ENCODE measurements at regions of chr11 and their contacts with region 1.

Region 1: DNA sequence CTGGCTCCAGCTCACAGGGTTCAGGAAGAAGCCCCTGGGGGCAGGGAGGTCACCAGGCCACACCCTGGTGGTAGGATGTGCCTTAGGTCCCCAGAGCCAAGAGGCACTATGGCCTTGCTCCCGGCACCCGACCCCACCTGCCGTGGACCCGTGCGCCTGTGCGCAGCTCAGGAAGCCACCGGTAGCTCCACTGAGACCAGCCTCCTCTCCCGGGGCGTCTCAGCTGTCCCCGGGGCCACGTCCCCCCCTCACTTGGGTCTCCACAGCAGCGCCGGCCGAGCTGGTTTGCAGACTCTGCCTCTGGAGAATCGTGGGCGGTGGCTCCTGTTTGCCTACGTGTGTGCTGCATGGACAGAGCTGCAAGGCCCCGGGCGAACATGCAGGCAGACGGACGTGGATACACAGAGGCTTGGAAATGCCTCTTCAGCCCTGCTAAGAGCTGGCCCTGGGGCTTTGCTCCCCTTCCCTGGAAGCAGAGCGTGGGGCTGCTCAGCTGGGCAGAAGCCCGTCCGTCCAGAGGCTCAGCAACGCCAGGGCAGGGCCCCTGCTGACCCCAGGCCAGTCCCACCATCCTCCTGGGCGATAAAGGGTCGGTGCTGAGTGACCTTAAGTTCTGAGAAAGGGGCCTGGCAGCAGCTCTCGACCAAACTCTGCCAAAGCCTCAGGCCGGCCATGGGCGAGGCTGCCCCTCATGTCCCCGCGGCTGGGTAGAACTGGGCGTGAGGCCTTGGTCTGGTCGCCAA is 15.3 kb upstream of the MUC5B start:
- DNase-seq: no peak
- ATAC-seq: no peak
- H3K4me3 ChIP-seq: no peak overlapping the region
- H3K4me3 Mint-ChIP-seq: no peak overlapping the region
- H3K27ac ChIP-seq: no peak overlapping the region
- H3K27ac Mint-ChIP-seq: no peak overlapping the region
- H3K4me1 ChIP-seq: peaks cover 0 to 7% of the 10 kb centered on the region in 2 experiments
- H3K4me1 Mint-ChIP-seq: no peaks in the 10 kb centered on the region
- H3K27me3 ChIP-seq: peaks cover 0 to 38% of the 10 kb centered on the region in 2 experiments
- H3K27me3 Mint-ChIP-seq: peaks cover 8% of the 10 kb centered on the region in 2 donors

Region 2: GRCh38 chr11:1382831-1383607 is 175.4 kb after region 1 on chr11:
- CTCF ChIA-PET with region 1: no interaction called
- POLR2A ChIA-PET with region 1: no interaction called
- DNase-seq: peak; percentile 50 to 89 (median 71)
- ATAC-seq: peak; percentile 78 to 87 (median 83)
- H3K4me3 ChIP-seq: peak overlapping the region; percentile 30 to 75
- H3K4me3 Mint-ChIP-seq: peak overlapping the region; percentile 76 to 81 (median 76)
- H3K27ac ChIP-seq: peak overlapping the region; percentile 94
- H3K27ac Mint-ChIP-seq: peak overlapping the region; percentile 61 to 79
- H3K4me1 ChIP-seq: peaks cover 0 to 14% of the 10 kb centered on the region in 2 experiments
- H3K4me1 Mint-ChIP-seq: peaks cover 4 to 16% (median 15%) of the 10 kb centered on the region in 3 donors
- H3K27me3 ChIP-seq: peaks cover 0 to 8% of the 10 kb centered on the region in 2 experiments
- H3K27me3 Mint-ChIP-seq: no peaks in the 10 kb centered on the region

Region 3: GRCh38 chr11:1619449-1619848 is 411.9 kb after region 1 on chr11:
- CTCF ChIA-PET with region 1: no interaction called
- POLR2A ChIA-PET with region 1: interaction called in 1 of 2 experiments, 10 read pairs
- DNase-seq: peak in 11 of 35 experiments; percentile 4 to 41 (median 14)
- ATAC-seq: peak in 2 of 4 experiments; percentile 58 to 79
- H3K4me3 ChIP-seq: no peak overlapping the region
- H3K4me3 Mint-ChIP-seq: no peak overlapping the region
- H3K27ac ChIP-seq: no peak overlapping the region
- H3K27ac Mint-ChIP-seq: peak overlapping the region in 1 of 2 donors; percentile 26
- H3K4me1 ChIP-seq: no peaks in the 10 kb centered on the region
- H3K4me1 Mint-ChIP-seq: peaks cover 0 to 6% (median 6%) of the 10 kb centered on the region in 3 donors
- H3K27me3 ChIP-seq: peaks cover 2 to 25% of the 10 kb centered on the region in 2 experiments
- H3K27me3 Mint-ChIP-seq: peaks cover 26 to 38% of the 10 kb centered on the region in 2 donors